ENCODE measurements at regions of chr5 and their contacts with region 1.

Region 1: DNA sequence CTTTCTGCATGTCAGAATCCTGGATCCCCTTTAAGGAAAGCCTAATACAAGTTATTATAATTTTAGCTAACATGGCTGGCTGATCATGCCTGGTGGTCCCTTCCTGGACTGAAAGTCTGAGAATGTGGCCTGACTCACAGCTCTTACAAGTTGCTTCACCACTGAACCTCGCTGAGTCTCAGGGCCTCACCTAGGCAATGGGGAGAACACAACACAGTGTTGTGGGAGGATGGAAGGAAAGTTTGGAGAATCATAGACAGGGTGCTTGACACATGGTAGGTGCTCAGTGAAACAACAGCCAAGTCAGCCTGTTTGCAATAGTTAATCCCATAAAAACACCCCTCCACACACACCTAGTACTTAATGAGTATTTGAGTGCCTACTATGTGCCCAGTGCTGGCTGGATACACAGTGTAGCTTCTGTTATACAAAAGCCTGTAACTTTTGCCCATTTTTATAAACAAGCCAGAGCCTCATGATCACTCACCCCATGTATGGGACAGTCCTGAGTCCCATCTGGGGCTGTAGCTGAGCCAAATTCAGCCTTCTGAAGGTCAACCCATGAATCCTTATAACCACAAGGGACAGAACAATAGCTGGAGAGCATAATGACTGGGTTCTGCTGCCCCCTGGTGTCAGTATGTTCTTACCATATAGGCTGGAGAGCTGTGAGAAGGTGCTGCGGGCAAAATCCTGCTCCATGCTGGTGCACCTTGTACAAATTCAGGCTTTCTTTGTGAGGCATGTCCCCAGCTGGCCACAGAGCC is 3.9 kb downstream of the ACSL6 start:
- DNase-seq: peak; percentile 90
- ATAC-seq: peak; percentile 79
- H3K4me3 Mint-ChIP-seq: no peak overlapping the region
- H3K27ac Mint-ChIP-seq: no peak overlapping the region
- H3K4me1 Mint-ChIP-seq: peaks cover 21% of the 10 kb centered on the region
- H3K27me3 Mint-ChIP-seq: peaks cover 28% of the 10 kb centered on the region

Region 2: DNA sequence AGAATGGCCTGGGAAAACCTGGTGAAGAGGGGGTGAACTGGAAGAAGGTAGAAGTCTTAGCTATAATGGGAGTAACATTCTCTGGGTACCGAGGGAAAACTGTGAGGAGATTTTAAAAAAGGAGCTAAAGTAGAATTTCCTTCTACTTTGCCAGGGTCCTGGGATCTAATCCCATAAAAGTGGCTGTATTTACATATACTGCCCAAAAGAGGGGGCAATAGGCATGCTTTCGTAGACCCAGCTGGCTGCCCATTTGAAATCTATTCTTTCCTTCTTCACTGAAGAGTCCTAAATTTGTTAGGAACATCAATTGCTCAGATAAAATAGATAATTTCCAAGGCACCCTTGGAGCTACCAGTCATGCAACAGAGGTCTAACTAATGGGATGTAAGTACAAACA is 584.5 kb before region 1 on chr5:
- CTCF ChIA-PET with region 1: interaction called, 4 read pairs
- POLR2A ChIA-PET with region 1: no interaction called
- intact Hi-C with region 1: loop called (anchors 5 to 10 kb)
- DNase-seq: no peak
- ATAC-seq: no peak
- H3K4me3 Mint-ChIP-seq: no peak overlapping the region
- H3K27ac Mint-ChIP-seq: peak overlapping the region; percentile 39
- H3K4me1 Mint-ChIP-seq: peaks cover 15% of the 10 kb centered on the region
- H3K27me3 Mint-ChIP-seq: no peaks in the 10 kb centered on the region

Region 3: DNA sequence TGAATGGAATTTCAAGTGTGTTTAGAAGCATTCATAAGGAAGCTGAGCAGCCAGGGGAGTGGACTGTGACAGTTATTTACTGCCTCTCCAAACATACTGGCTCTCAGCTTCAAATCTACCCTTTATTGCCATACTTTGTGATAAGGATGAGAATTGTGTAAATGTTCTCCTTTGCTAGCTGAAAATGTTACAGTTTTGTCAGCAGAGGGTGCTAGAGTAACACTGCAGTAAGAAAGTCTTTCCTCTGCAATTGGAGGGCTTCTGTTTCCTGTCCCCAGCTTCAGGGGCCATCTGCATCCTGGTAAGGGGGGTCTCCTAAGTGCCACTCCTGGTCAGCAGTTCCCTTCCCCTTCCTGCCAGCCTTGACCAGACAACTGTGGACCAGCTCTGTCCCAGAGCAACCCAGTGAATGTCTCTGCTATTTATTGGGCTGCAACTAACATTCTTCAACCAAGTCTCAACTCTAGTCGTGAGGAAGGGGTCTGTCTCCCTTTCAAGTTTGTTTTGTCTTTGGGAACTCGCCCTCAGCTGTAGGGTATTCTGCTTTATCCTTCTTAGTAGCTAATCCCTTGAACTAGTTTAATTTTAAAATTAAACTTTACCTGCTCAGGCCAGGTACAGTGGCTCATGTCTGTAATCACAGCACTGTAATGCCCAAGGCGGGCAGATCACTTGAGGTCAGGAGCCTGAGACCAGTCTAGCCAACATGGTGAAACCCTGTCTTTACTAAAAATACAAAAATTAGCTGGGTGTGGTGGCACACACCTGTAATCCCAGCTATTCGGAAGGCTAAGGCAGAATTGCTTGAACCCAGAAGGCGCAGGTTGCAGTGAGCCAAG is 417.9 kb before region 1 on chr5:
- CTCF ChIA-PET with region 1: interaction called, 109 read pairs
- POLR2A ChIA-PET with region 1: no interaction called
- intact Hi-C with region 1: loop called (anchors 1 kb)
- DNase-seq: peak; percentile 13
- ATAC-seq: peak; percentile 74
- H3K4me3 Mint-ChIP-seq: no peak overlapping the region
- H3K27ac Mint-ChIP-seq: no peak overlapping the region
- H3K4me1 Mint-ChIP-seq: peaks cover 40% of the 10 kb centered on the region
- H3K27me3 Mint-ChIP-seq: no peaks in the 10 kb centered on the region

Region 4: GRCh38 chr5:131810510-131811249 is 196.9 kb before region 1 on chr5:
- CTCF ChIA-PET with region 1: interaction called, 12 read pairs
- POLR2A ChIA-PET with region 1: interaction called, 4 read pairs
- intact Hi-C with region 1: loop called (anchors 1 to 2 kb)
- DNase-seq: no peak
- ATAC-seq: no peak
- H3K4me3 Mint-ChIP-seq: no peak overlapping the region
- H3K27ac Mint-ChIP-seq: no peak overlapping the region
- H3K4me1 Mint-ChIP-seq: no peaks in the 10 kb centered on the region
- H3K27me3 Mint-ChIP-seq: peaks cover 3% of the 10 kb centered on the region

Region 5: GRCh38 chr5:131944702-131945550 is 62.7 kb before region 1 on chr5:
- CTCF ChIA-PET with region 1: no interaction called
- POLR2A ChIA-PET with region 1: no interaction called
- intact Hi-C with region 1: no loop called
- DNase-seq: no peak
- ATAC-seq: no peak
- H3K4me3 Mint-ChIP-seq: no peak overlapping the region
- H3K27ac Mint-ChIP-seq: no peak overlapping the region
- H3K4me1 Mint-ChIP-seq: no peaks in the 10 kb centered on the region
- H3K27me3 Mint-ChIP-seq: no peaks in the 10 kb centered on the region

Region 6: DNA sequence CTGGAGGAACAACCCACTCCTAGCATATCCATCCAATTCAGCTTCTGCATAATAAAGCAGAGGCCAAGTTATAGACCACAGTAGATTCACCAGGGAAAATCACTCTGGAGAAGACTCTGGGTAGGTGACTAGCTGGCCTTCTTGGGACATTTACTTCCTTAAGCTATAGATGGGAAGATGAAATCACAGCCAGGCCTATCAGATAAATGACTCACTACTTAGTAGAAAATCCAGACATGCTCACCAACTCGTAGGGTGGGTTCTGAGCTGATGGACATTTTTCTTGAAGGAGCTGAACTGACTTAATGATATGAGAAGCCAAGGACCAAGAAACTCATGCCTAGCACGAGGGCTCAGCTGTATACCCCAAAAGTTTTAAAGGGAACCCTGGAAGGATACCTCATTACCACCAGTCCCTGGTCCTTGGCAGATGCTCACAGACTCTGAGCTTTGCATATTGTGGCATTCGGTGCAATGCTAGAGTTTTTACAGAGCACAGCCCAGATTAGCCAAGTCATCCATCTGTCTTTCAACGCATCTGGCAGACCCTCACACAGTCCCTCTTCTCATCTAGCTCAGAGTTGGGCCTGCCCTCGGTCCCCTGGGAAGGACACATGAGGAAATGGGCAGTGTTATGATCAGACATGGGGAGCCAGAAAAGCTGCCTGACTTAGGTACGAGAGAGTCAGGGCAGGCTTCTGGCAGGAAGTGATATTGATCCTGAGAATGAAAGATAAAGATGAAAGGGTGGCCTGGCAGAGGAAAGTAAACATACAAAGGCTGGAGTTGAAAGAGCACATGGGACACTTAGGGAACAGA is 11.2 kb before region 1 on chr5:
- CTCF ChIA-PET with region 1: interaction called, 18 read pairs
- POLR2A ChIA-PET with region 1: no interaction called
- intact Hi-C with region 1: no loop called
- DNase-seq: no peak
- ATAC-seq: no peak
- H3K4me3 Mint-ChIP-seq: no peak overlapping the region
- H3K27ac Mint-ChIP-seq: peak overlapping the region; percentile 32
- H3K4me1 Mint-ChIP-seq: peaks cover 42% of the 10 kb centered on the region
- H3K27me3 Mint-ChIP-seq: no peaks in the 10 kb centered on the region

Region 7: DNA sequence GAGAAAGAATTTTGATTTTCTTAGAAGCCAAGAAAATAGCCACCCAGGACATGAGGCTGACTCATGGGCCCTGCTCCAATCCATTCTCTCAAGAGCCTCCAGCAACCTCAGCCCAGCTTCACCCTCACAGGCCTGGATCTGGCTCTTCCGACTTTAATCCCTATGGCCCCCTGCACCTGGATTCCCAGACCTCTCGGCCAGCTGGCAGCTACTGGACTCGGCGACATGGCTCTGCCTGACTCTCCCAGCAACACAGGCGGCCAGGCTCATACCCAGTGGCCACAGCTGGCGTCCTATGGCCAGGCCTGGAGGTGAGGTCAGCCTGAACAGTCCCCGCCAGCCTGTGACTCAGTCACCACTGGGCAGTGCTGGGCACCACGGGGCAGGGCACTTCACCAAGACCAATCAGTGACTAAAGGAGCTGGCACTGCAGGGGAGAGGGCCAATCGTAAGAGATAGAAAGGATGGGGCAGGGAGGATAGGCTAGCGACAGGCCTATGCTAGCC is 243.7 kb after region 1 on chr5:
- CTCF ChIA-PET with region 1: no interaction called
- POLR2A ChIA-PET with region 1: no interaction called
- intact Hi-C with region 1: no loop called
- DNase-seq: peak; percentile 1
- ATAC-seq: no peak
- H3K4me3 Mint-ChIP-seq: no peak overlapping the region
- H3K27ac Mint-ChIP-seq: no peak overlapping the region
- H3K4me1 Mint-ChIP-seq: no peaks in the 10 kb centered on the region
- H3K27me3 Mint-ChIP-seq: peaks cover 2% of the 10 kb centered on the region

Region 8: DNA sequence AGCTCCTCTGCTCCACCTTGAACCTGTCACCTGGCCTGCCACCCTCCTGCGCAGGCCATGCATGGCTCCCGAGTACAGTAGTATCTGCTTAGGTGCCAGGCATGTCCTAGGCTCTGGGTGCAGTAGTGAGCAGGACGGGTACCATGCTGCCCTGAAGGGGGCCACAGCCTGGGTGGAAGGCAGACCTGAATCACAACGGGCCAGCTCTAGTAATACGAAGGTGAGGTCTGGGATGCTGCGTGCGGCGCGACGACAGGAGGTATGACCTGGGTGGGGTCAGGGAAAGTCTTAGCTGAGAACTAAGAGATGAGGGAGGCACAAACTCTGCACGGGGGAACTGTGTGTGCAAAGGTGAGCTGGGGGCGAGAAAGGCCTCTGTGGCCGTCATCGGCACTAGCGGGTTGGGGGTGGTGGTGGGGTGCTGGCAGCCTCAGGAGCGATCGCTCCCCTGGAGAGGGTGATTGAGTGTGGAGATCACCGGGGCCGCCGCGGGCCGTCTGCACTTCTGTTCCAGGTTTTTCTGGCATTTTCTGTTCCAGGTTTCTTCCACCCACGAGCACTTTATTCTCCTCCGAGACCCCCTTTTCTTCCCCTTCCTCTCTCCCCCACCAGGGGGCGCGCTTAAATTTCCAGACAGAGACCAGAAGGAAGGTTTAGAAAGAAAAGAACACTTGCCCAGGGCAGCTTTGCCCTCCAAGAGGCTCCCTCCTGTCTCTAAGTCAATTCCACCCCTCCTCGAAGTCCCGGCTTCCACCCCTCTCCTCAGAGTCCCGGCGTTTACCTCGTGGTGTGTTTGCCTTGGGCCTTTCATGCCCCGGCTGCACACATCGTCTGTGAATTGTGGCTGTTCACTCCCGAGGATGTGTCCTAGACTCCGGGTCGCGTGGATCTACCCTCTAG is 265.0 kb after region 1 on chr5:
- CTCF ChIA-PET with region 1: no interaction called
- POLR2A ChIA-PET with region 1: no interaction called
- intact Hi-C with region 1: no loop called
- DNase-seq: peak; percentile 85
- ATAC-seq: peak; percentile 42
- H3K4me3 Mint-ChIP-seq: no peak overlapping the region
- H3K27ac Mint-ChIP-seq: no peak overlapping the region
- H3K4me1 Mint-ChIP-seq: peaks cover 2% of the 10 kb centered on the region
- H3K27me3 Mint-ChIP-seq: peaks cover 18% of the 10 kb centered on the region

Region 9: DNA sequence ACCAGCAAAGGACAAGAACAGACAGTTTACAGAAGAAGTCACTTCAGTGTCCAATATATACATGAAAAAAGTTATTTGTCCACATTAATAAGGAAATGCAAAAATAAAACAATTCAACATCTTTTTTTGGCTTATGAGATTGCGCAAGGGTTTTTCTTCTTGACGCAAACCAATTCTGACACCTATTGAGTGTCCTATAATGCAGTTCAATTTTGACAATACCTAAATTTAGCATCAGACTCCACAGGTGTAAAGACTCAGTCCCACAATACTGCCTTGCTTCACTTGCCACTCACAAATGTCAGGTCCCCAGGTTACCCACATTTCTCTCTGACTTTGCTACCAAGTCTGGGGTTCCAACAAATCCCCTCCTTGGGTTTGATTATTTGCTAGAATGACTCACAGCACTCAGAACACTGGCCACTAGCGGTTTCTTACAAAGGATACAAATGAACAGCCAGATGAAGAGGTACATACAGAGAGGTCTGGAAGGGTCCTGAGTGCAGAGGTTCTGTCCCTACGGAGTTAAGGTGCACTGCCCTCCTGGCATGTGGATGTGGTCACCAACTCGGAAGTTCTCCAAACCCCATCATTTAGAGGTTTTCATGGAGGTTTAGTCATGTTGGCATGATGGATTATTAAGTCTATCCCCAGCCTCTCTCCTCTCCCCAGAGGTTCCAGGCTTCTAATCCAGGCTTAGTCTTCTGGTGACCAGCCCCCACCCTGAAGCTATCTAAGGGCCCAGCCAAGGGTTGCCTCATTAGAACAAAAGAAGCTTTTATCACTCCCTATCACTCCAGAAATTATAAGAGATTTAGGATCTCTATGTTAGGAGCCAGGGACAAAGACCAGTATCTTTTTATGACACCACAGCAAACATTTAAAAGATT is 335.0 kb after region 1 on chr5:
- CTCF ChIA-PET with region 1: no interaction called
- POLR2A ChIA-PET with region 1: no interaction called
- intact Hi-C with region 1: no loop called
- DNase-seq: no peak
- ATAC-seq: no peak
- H3K4me3 Mint-ChIP-seq: no peak overlapping the region
- H3K27ac Mint-ChIP-seq: no peak overlapping the region
- H3K4me1 Mint-ChIP-seq: no peaks in the 10 kb centered on the region
- H3K27me3 Mint-ChIP-seq: no peaks in the 10 kb centered on the region

Measured in activated CD4-positive, alpha-beta T cell treated with anti-CD3 and anti-CD28 coated beads for 36 hours (primary cell).